Adrenal gland (tissue), 19 donors: ENCODE measurements at regions of chr11 and their contacts with region 1.

Region 1: DNA sequence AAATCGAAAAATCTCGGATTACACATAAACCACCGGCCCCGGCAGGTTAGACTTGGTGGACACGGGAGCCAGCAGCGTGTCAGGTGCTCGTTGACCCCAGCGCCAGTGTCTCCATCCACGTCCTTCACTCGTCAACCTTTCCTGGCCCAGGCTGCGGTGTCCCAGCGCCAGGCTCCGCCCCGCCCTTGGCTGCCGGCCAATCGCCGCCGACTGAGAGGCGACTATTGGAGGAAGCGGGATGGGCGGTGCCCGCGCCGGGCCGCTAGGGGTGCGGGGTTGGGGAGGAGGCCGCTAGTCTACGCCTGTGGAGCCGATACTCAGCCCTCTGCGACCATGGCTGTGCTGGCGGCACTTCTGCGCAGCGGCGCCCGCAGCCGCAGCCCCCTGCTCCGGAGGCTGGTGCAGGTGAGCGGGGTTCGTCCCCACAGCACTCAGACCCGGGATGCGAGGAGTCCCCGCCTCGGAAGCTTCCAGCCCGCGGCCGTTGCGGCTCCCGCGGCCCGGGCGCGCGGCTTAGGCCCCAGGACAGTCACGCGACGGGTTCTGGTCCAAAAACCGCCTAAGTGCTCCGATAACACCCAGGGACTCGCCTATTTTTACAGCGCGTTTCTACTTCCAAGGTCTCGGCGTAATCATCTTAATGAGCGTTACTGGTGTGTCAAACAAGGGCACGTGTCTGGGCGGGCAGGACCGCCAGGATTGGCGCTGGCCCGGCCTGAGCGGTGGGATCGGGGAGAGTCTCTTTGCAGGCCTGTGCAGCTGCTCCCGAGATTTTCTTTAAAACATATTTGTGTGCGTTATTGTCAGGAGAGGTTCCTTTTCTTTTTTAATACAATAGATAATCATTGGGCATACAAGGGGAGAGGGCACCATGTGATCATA is at the start of gene ACAT1:
- DNase-seq: peak; percentile 97 to 99 (median 98)
- H3K4me3 ChIP-seq: peak within 1 kb of the TSS; percentile 32 to 72 (median 48)
- H3K27ac ChIP-seq: peak within 1 kb of the TSS; percentile 60 to 97 (median 89)
- H3K4me1 ChIP-seq: peaks cover 24 to 34% of the 10 kb centered on the region in 2 donors
- H3K27me3 ChIP-seq: no peaks in the 10 kb centered on the region
- CTCF ChIP-seq: peak; percentile 17 to 79 (median 52)
- POLR2A ChIP-seq: peak; percentile 92 to 96
- total RNA-seq, gene ACAT1: 157 to 777 (median 226) TPM

Region 2: DNA sequence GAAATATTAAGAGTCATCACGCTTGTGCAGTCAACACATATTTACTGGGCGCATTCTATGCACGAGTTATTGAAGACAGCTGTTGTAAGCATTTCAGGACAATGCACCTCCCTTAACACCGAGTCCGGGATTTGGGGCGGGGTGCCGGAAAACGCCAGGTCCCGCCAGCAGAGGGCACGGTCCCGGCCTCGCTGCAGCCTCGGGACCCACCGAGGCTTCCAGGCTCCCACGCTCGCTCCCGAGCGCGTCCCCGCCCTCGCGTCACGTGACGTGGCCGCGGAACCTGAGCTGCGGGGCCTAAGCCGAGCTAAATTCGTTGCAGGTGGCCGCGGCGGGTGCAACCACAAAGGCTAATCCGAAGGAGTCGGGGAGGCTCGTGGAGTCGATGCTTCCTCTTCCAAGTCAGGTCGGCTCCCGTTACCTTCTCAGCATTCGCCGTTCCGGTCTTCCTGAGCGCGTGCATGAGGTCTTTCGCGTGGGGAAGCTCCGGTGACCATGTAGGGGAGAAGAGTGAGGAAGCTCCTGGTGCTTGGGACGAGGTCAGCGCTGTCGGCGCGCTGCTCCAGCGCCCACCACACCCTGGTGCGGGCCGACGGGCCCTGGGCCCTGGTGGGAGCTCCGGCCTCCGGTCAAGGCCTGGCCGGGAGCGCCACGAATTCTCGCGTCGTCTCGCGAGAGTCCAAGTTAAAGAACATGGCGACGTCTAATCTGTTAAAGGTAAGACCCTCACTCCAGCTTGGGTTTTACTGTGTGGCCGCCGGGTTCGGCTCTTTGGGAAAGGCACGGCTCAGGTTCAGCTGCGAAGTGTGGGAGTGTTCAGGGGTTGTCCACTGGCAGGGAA is 112.6 kb before region 1 on chr11 and contains the start of gene CUL5:
- intact Hi-C with region 1: no loop called
- DNase-seq: peak; percentile 90 to 96 (median 93)
- H3K4me3 ChIP-seq: peak within 1 kb of the TSS; percentile 46 to 99 (median 96)
- H3K27ac ChIP-seq: peak within 1 kb of the TSS; percentile 89 to 98 (median 98)
- H3K4me1 ChIP-seq: peaks cover 22 to 39% of the 10 kb centered on the region in 2 donors
- H3K27me3 ChIP-seq: no peaks in the 10 kb centered on the region
- CTCF ChIP-seq: peak; percentile 75 to 93 (median 86)
- POLR2A ChIP-seq: peak; percentile 67 to 69
- total RNA-seq, gene CUL5: 16.0 to 114 (median 41.6) TPM

Region 3: GRCh38 chr11:108647701-108648527 is 526.4 kb after region 1 on chr11:
- intact Hi-C with region 1: loop called in 1 of 2 experiments (anchors 10 kb)
- DNase-seq: peak; percentile 55 to 86 (median 70)
- H3K4me3 ChIP-seq: no peak overlapping the region
- H3K27ac ChIP-seq: peak overlapping the region in 1 of 5 donors; percentile 29
- H3K4me1 ChIP-seq: peaks cover 0 to 3% of the 10 kb centered on the region in 2 donors
- H3K27me3 ChIP-seq: no peaks in the 10 kb centered on the region
- CTCF ChIP-seq: peak; percentile 49 to 76 (median 69)
- POLR2A ChIP-seq: no peak